ENCODE measurements at regions of chr9 and their contacts with region 1.

Region 1: GRCh38 chr9:69745716-69746437 is 13.9 kb downstream of the PTAR1 start:
- DNase-seq: no peak
- H3K4me3 Mint-ChIP-seq: no peak overlapping the region
- H3K27ac Mint-ChIP-seq: no peak overlapping the region
- H3K4me1 Mint-ChIP-seq: peaks cover 26% of the 10 kb centered on the region
- H3K27me3 Mint-ChIP-seq: no peaks in the 10 kb centered on the region

Region 2: DNA sequence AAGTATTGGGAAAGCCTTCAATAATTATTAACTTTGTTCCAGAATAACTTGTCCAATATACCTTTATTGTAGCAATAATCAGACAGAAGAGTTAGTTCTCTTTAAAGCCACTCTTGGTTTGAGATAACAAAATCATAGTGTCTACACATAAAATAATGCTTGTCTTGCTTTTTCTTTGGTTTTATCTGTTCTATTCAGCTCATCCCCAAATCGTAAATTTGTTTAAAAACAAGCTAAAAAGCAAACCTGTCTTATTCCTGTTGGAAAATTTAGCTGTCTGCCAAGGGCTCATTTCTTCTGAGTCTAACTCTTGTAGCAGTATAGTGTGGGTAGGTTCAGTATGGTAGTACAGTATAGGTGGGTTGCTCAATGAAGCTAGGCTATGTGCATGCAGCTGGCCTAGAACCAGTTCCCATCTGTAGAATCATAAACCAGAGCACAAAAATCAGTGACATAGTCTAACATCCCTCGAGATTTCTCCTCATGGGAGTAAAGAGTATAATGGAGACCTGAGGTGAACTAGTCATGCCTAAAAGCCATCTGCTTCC is 55.8 kb before region 1 on chr9:
- CTCF ChIA-PET with region 1: no interaction called
- POLR2A ChIA-PET with region 1: no interaction called
- intact Hi-C with region 1: loop called (anchors 2 kb)
- DNase-seq: no peak
- H3K4me3 Mint-ChIP-seq: no peak overlapping the region
- H3K27ac Mint-ChIP-seq: no peak overlapping the region
- H3K4me1 Mint-ChIP-seq: no peaks in the 10 kb centered on the region
- H3K27me3 Mint-ChIP-seq: peaks cover 6% of the 10 kb centered on the region

Region 3: GRCh38 chr9:69731348-69731747 is 14.5 kb before region 1 on chr9:
- CTCF ChIA-PET with region 1: no interaction called
- POLR2A ChIA-PET with region 1: no interaction called
- intact Hi-C with region 1: loop called (anchors 1 kb)
- DNase-seq: no peak
- H3K4me3 Mint-ChIP-seq: no peak overlapping the region
- H3K27ac Mint-ChIP-seq: peak overlapping the region; percentile 42
- H3K4me1 Mint-ChIP-seq: peaks cover 12% of the 10 kb centered on the region
- H3K27me3 Mint-ChIP-seq: no peaks in the 10 kb centered on the region